Activated naive CD4-positive, alpha-beta T cell treated with anti-CD3 and anti-CD28 coated beads, Interleukin-2, amount 10 ng/mL, durations not matched to agents 7 days and 5 days (primary cell): ENCODE measurements at regions of chr7 and their contacts with region 1.

Region 1: GRCh38 chr7:22876986-22877729 is 54.5 kb upstream of the TOMM7 start:
- DNase-seq: no peak
- H3K4me3 Mint-ChIP-seq: no peak overlapping the region
- H3K27ac Mint-ChIP-seq: no peak overlapping the region
- H3K4me1 Mint-ChIP-seq: peaks cover 5% of the 10 kb centered on the region
- H3K27me3 Mint-ChIP-seq: peaks cover 7% of the 10 kb centered on the region

Region 2: GRCh38 chr7:22860784-22861482 is 16.2 kb before region 1 on chr7:
- CTCF ChIA-PET with region 1: interaction called, 10 read pairs
- DNase-seq: peak; percentile 35
- H3K4me3 Mint-ChIP-seq: no peak overlapping the region
- H3K27ac Mint-ChIP-seq: no peak overlapping the region
- H3K4me1 Mint-ChIP-seq: peaks cover 30% of the 10 kb centered on the region
- H3K27me3 Mint-ChIP-seq: no peaks in the 10 kb centered on the region

Region 3: DNA sequence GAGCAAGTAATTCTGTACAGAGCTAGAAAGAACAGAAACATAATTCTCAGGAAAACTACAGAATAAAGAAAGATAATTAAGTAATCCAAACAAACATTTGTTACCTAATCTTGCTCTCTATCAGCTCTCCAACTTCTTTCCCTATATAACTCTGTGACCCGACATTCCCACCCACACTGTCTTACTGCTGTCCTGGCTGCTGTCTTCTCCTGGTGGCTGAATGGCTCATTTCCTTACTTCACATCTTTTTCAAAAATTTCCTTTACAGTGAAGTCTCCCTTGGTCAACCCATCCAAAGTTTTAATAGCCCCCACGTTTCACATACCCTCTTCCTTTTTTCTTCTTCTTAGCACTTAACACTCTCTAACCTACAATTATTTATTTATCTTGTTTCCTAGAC is 72.8 kb after region 1 on chr7:
- CTCF ChIA-PET with region 1: no interaction called
- DNase-seq: no peak
- H3K4me3 Mint-ChIP-seq: no peak overlapping the region
- H3K27ac Mint-ChIP-seq: no peak overlapping the region
- H3K4me1 Mint-ChIP-seq: no peaks in the 10 kb centered on the region
- H3K27me3 Mint-ChIP-seq: no peaks in the 10 kb centered on the region

Region 4: GRCh38 chr7:23105644-23106056 is 228.5 kb after region 1 on chr7 and contains the start of gene KLHL7:
- CTCF ChIA-PET with region 1: no interaction called
- DNase-seq: peak; percentile 98
- H3K4me3 Mint-ChIP-seq: peak within 1 kb of the TSS; percentile 91
- H3K27ac Mint-ChIP-seq: peak within 1 kb of the TSS; percentile 94
- H3K4me1 Mint-ChIP-seq: peaks cover 26% of the 10 kb centered on the region
- H3K27me3 Mint-ChIP-seq: no peaks in the 10 kb centered on the region